ENCODE measurements at regions of chr2 and their contacts with region 1.

Region 1: DNA sequence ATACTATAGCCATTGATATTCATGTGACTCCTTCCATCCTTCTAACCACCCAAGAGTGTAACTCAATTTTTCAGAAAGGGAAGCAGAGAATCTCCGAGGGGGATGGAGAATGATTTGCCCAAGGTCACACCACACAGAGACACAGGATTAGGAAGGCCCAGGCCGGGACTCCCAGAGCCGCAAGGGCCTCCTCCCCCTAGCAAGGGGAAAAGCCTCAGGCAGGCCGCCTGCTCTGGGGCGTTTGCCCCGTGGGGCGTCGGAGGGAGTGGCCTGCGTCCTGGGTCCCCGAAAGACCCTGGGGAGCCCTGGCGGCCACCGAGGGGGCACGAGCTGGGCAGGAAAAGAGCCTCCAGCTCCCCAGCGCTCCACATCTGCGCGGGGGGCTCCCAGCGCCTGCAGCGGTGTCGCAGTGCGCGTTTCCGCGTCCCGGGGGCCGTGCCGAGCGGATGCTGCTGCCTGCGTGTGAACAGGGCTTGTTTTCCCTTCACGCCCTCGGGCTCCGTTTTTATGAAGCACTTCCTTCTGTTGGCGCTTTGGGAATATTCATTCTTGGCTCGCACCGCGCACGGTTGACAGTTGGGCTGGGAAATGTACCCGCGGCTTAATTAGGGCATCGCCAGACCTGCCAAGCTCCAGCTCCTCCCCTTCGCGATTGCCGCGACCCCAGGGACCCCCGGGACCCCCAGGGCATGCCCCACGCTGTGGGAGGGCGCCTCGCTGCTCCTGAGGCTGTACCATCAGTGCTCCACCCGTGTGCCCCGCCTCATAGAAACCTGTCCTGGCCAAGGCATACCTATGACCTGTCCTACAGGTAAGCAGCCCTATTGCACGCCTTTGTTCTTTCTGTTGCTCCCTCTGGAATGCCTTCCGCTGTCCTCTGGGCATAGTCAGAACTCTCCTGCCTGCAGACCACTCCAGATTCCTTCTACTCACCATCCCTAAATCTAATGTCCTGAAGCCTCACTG is 158.9 kb upstream of the GLI2 start:
- DNase-seq: peak; percentile 57 to 77
- H3K4me3 ChIP-seq: peak overlapping the region; percentile 23 to 62 (median 42)
- H3K27ac ChIP-seq: peak overlapping the region; percentile 81 to 82
- H3K4me1 ChIP-seq: peaks cover 0 to 7% of the 10 kb centered on the region in 2 donors
- H3K27me3 ChIP-seq: no peaks in the 10 kb centered on the region
- CTCF ChIP-seq: peak in 2 of 3 donors; percentile 15 to 35
- POLR2A ChIP-seq: no peak

Region 2: GRCh38 chr2:119129976-119130375 is 1446.8 kb before region 1 on chr2:
- intact Hi-C with region 1: loop called (anchors 5 kb)
- DNase-seq: no peak
- H3K4me3 ChIP-seq: no peak overlapping the region
- H3K27ac ChIP-seq: no peak overlapping the region
- H3K4me1 ChIP-seq: no peaks in the 10 kb centered on the region
- H3K27me3 ChIP-seq: peaks cover 0 to 33% of the 10 kb centered on the region in 2 donors
- CTCF ChIP-seq: no peak
- POLR2A ChIP-seq: no peak

Region 3: GRCh38 chr2:120103723-120104467 is 472.9 kb before region 1 on chr2:
- intact Hi-C with region 1: loop called (anchors 5 kb)
- DNase-seq: no peak
- H3K4me3 ChIP-seq: no peak overlapping the region
- H3K27ac ChIP-seq: no peak overlapping the region
- H3K4me1 ChIP-seq: peaks cover 0 to 8% of the 10 kb centered on the region in 2 donors
- H3K27me3 ChIP-seq: no peaks in the 10 kb centered on the region
- CTCF ChIP-seq: no peak
- POLR2A ChIP-seq: no peak

Region 4: DNA sequence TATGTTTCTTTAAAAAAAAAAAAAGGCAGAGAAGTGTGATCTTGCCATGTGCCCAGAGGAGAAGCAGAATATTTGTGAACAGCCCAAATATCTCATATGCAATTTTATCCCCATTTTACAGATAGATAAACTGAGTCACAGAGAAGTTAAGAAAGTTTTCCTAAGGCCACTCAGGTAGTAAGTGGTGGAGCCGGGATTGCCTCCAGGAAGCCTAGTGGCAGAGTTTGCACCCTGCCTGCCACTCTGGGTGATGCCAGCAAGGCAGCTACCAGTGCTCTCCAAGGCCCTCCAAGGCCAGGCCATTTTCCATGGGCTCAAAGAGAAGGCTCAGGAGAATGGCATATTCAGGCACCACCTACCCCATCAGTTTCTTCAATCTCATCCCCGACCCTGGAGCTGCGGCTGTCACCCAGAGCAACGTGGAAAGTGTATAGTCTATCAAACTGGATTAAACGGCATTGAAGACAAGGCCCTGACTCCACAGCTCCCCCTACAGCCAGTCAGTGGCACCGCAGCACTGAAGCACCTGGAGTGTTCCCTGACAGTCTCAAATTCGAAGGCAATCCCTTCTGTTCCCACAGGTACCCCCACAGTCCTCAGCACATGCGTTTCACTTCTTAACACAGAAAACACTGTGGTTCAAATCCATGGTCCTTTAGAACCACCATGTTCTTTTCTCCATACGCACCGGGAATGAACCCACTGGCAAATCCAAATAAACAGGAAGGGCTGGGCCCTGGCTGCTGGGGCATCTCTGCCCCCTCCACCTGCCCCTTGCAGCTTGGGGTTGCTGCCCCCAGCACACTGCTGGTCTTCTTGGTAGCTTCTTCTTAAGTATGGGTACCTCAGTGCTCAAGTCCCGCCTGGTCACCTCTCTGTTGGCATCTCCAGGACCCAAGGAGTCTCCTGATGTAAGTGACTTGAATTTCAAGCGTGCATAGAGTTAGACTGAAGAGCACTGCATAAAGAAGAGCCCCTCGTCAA is 55.6 kb before region 1 on chr2:
- intact Hi-C with region 1: no loop called
- DNase-seq: peak; percentile 40 to 74
- H3K4me3 ChIP-seq: no peak overlapping the region
- H3K27ac ChIP-seq: no peak overlapping the region
- H3K4me1 ChIP-seq: no peaks in the 10 kb centered on the region
- H3K27me3 ChIP-seq: no peaks in the 10 kb centered on the region
- CTCF ChIP-seq: peak; percentile 36 to 80 (median 69)
- POLR2A ChIP-seq: no peak

Region 5: GRCh38 chr2:120875431-120875830 is 298.6 kb after region 1 on chr2:
- intact Hi-C with region 1: no loop called
- DNase-seq: no peak
- H3K4me3 ChIP-seq: no peak overlapping the region
- H3K27ac ChIP-seq: no peak overlapping the region
- H3K4me1 ChIP-seq: no peaks in the 10 kb centered on the region
- H3K27me3 ChIP-seq: no peaks in the 10 kb centered on the region
- CTCF ChIP-seq: no peak
- POLR2A ChIP-seq: no peak

Region 6: GRCh38 chr2:121071034-121071504 is 494.3 kb after region 1 on chr2:
- intact Hi-C with region 1: no loop called
- DNase-seq: peak; percentile 52 to 72
- H3K4me3 ChIP-seq: no peak overlapping the region
- H3K27ac ChIP-seq: no peak overlapping the region
- H3K4me1 ChIP-seq: no peaks in the 10 kb centered on the region
- H3K27me3 ChIP-seq: peaks cover 0 to 4% of the 10 kb centered on the region in 2 donors
- CTCF ChIP-seq: peak; percentile 86 to 93 (median 89)
- POLR2A ChIP-seq: no peak